ENCODE measurements at regions of chr11 and their contacts with region 1.

Region 1: GRCh38 chr11:34105079-34105956 is at the start of gene NAT10:
- DNase-seq: peak; percentile 91 to 99 (median 93)

Region 2: DNA sequence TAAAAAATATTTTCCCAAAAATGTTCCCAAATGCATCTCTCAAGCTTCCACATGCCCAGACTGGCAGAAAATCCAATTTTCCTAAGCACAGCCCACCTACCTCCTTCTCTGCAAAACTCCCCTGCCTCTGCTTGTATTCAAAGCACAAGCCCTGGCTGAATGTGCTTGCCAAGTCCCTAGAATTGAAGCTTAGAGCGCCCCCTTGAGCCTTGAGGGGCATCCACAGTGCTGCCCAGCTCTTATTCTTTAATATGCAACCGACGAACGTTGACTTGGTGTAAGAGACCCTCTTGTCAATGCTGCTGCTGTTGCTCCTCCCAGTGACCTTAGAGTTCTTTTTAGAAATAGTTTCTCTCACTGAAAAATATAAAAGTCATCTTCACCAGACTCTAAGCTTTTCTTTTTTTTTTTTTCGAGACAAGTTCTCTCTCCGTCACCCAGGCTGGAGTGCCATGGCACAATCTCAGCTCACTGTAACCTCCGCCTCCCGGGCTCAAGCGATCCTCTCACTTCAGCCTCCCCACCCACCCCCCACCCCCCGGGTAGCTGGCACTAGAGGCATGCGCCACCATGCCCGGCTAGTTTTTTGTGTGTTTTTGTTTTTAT is 117.2 kb before region 1 on chr11:
- intact Hi-C with region 1: no loop called
- DNase-seq: peak in 9 of 10 donors; percentile 34 to 95 (median 74)

Region 3: GRCh38 chr11:34051349-34052035 is 53.8 kb before region 1 on chr11 and contains the start of gene CAPRIN1:
- intact Hi-C with region 1: loop called (anchors 1 kb)
- DNase-seq: peak; percentile 74 to 98 (median 86)